Natural killer cell (primary cell): ENCODE measurements at regions of chr1 and their contacts with region 1.

Region 1: DNA sequence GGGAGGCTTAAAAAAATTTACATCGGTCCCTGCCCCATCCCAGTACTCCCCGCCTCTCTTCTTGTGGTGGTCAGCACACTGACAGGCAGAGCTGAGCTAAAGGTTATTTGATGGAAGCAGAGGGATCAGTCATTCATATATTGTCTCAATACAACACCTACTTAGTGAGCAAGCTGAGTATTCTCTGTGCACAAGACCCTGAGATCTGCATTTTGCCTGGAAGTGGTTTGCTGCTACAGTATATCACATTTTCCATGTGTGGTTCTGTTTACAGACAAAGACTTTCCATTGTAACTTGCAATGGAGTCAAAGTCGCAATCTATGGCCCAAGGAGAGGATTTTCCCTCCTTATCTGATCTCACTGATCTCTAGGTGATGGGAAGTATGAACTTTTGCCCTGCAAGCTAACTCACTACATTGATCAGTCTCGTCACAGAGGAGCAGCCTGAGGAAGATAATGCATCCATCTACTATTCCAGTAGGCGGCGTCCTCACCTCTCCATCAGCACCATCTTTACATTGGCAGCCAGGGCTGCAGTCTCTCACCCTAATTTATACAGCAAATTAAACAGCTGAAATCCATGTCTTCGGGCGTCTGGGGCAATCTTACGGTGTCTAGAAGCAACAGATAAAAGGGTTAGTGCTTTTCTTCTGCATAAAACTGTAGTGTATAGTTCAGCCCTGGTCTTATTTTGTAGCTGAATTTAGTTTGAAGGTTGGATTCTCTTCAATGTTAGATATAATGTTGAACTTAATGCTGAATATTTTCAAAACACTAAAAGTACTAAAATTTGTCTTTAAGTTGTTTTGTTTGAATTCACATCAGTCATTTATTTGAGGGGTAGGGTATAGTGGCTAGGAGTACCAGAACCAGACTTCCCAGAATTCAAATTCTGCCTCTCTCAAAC is 3.2 kb upstream of the TRAF5 start:
- DNase-seq: peak; percentile 44 to 86
- ATAC-seq: peak; percentile 69 to 82 (median 73)
- H3K4me3 ChIP-seq: no peak overlapping the region
- H3K4me3 Mint-ChIP-seq: no peak overlapping the region
- H3K27ac ChIP-seq: no peak overlapping the region
- H3K27ac Mint-ChIP-seq: no peak overlapping the region
- H3K4me1 ChIP-seq: peaks cover 23% of the 10 kb centered on the region
- H3K4me1 Mint-ChIP-seq: peaks cover 25 to 31% of the 10 kb centered on the region in 2 donors
- H3K27me3 ChIP-seq: no peaks in the 10 kb centered on the region
- H3K27me3 Mint-ChIP-seq: no peaks in the 10 kb centered on the region
- CTCF ChIP-seq: peak; percentile 82

Region 2: DNA sequence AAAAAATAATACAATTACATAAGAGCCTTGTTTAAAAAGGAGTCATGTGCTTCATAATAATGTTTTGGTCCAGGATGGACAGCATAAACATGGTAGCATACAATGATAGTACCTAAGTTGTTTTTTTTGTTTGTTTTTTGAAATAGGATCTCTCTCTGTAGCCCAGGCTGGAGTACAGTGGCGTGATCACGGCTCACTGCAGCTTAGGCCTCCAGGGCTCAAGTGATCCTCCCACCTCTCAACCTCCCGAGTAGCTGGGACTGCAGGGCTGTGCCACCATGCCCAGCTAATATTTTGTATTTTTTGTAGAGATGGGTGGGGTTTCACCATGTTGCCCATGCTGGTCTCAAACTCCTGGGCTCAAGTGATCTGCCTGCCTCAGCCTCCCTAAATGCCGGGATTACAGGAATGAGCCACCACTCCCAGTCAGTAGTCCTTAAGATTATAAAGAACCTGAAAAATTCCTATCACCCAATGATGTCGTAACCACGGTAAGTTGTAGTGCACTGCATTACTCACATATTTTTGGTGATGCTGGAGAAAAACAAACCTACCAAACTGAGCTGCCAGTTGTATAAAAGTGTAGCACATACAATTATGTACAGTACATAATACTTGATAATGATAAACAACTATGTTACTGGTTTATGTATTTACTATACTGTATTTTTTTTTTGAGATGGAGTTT is 86.6 kb before region 1 on chr1:
- intact Hi-C with region 1: no loop called
- DNase-seq: no peak
- ATAC-seq: no peak
- H3K4me3 ChIP-seq: no peak overlapping the region
- H3K4me3 Mint-ChIP-seq: no peak overlapping the region
- H3K27ac ChIP-seq: no peak overlapping the region
- H3K27ac Mint-ChIP-seq: no peak overlapping the region
- H3K4me1 ChIP-seq: no peaks in the 10 kb centered on the region
- H3K4me1 Mint-ChIP-seq: no peaks in the 10 kb centered on the region
- H3K27me3 ChIP-seq: no peaks in the 10 kb centered on the region
- H3K27me3 Mint-ChIP-seq: peaks cover 0 to 4% of the 10 kb centered on the region in 2 donors
- CTCF ChIP-seq: no peak

Region 3: DNA sequence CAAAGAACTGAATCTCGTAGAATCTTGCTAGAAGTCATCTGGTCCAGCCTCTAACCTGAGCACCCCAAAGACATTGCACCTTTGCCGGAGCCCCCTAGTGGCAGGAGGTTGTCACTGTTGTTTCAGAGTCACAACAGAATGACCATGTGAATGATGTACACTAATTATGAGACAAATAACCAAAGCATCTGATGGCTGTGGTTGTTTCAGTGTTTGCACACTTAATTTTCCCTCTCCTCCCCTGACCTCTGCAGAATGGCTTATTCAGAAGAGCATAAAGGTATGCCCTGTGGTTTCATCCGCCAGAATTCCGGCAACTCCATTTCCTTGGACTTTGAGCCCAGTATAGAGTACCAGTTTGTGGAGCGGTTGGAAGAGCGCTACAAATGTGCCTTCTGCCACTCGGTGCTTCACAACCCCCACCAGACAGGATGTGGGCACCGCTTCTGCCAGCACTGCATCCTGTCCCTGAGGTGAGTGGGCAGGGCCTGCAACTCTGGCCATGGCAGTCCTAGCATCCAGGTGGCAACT is 29.6 kb after region 1 on chr1:
- intact Hi-C with region 1: loop called (anchors 1 kb)
- DNase-seq: peak; percentile 44 to 71
- ATAC-seq: peak; percentile 77 to 88 (median 77)
- H3K4me3 ChIP-seq: no peak overlapping the region
- H3K4me3 Mint-ChIP-seq: peak overlapping the region; percentile 82
- H3K27ac ChIP-seq: peak overlapping the region; percentile 48
- H3K27ac Mint-ChIP-seq: peak overlapping the region; percentile 74 to 86
- H3K4me1 ChIP-seq: peaks cover 42% of the 10 kb centered on the region
- H3K4me1 Mint-ChIP-seq: peaks cover 58 to 74% of the 10 kb centered on the region in 2 donors
- H3K27me3 ChIP-seq: no peaks in the 10 kb centered on the region
- H3K27me3 Mint-ChIP-seq: no peaks in the 10 kb centered on the region
- CTCF ChIP-seq: peak; percentile 82

Region 4: DNA sequence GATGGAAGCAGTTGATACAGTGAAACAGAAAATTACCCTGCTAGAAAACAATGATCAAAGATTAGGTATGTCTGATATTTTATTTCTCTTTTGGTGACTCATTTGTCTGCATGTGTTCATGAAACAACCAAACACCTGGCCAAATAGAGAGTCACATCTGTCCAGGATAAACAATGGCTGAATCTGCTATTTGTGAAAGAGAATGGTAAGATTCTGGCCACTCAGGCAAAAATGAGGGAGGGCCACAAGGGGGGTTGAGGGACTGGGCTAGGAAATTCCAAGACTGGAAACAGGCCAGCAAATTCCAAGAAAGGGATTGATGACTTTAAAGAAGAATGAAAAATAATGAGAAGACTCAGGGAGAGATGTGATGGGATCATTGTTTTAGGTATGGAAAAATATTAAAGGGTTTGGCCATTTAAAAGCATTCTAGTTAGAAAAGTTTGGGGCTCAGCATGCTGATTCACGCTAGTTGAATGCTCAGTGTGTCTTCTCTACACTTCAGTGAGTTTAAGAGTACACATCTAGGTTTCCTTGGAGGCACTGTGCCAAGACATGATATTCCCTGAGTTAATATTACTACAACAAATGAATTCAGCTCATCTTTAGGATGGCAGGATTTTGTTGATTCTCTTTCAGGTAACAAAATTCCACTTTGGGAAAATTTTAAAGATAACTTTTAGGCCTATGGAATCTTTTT is 48.1 kb after region 1 on chr1:
- intact Hi-C with region 1: no loop called
- DNase-seq: no peak
- ATAC-seq: no peak
- H3K4me3 ChIP-seq: no peak overlapping the region
- H3K4me3 Mint-ChIP-seq: no peak overlapping the region
- H3K27ac ChIP-seq: no peak overlapping the region
- H3K27ac Mint-ChIP-seq: peak overlapping the region in 1 of 2 donors; percentile 36
- H3K4me1 ChIP-seq: no peaks in the 10 kb centered on the region
- H3K4me1 Mint-ChIP-seq: no peaks in the 10 kb centered on the region
- H3K27me3 ChIP-seq: no peaks in the 10 kb centered on the region
- H3K27me3 Mint-ChIP-seq: no peaks in the 10 kb centered on the region
- CTCF ChIP-seq: no peak

Region 5: GRCh38 chr1:211476200-211476849 is 152.9 kb after region 1 on chr1:
- intact Hi-C with region 1: loop called (anchors 1 kb)
- DNase-seq: peak; percentile 53 to 87
- ATAC-seq: peak; percentile 87 to 93 (median 89)
- H3K4me3 ChIP-seq: no peak overlapping the region
- H3K4me3 Mint-ChIP-seq: no peak overlapping the region
- H3K27ac ChIP-seq: no peak overlapping the region
- H3K27ac Mint-ChIP-seq: no peak overlapping the region
- H3K4me1 ChIP-seq: no peaks in the 10 kb centered on the region
- H3K4me1 Mint-ChIP-seq: no peaks in the 10 kb centered on the region
- H3K27me3 ChIP-seq: no peaks in the 10 kb centered on the region
- H3K27me3 Mint-ChIP-seq: peaks cover 17 to 23% of the 10 kb centered on the region in 2 donors
- CTCF ChIP-seq: peak; percentile 90

Region 6: DNA sequence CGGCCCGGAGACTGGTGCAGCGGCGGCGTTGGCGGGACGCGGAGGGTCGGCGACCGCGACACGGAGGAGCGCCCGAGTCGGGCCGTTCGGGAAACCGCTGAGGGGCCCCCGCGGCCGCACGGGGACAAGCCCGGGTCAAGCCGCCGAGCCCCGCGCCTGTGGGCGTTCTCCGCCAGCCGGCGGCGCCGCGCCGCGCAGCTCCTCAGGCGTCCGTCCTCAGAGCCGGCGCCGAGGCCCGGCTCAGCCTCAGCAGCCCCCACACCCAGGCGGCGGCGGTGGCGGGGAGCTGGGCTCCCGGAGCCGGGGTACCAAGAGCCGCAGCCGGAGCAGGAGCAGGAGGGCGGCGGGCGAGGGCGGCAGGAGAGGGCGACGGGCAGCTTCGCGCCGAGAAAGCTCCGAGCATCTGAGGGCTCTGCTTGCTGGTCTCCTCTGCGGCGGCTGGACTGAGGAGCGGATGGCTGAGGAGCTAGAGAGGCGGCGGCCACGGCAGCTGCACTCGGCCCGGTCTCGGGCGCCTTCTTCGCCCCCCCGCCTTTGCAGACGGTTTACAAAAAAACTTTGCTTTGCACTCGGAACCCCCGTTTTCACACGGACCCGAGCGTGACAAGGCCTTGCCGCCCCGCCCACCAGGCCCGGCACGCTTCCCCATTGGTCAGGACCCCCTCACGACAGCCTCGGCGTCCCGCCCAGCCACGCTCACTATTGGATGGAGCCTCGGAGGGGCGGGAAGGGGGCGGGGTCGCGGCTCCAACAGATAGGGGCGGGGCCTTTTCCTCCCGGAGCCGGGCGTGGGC is 255.4 kb after region 1 on chr1 and contains the start of gene SLC30A1:
- intact Hi-C with region 1: loop called (anchors 5 kb)
- DNase-seq: peak; percentile 99 to 100
- ATAC-seq: peak; percentile 88 to 98 (median 90)
- H3K4me3 ChIP-seq: peak within 1 kb of the TSS; percentile 95
- H3K4me3 Mint-ChIP-seq: peak within 1 kb of the TSS; percentile 94
- H3K27ac ChIP-seq: peak within 1 kb of the TSS; percentile 71
- H3K27ac Mint-ChIP-seq: peak within 1 kb of the TSS; percentile 81 to 83
- H3K4me1 ChIP-seq: peaks cover 39% of the 10 kb centered on the region
- H3K4me1 Mint-ChIP-seq: peaks cover 52 to 57% of the 10 kb centered on the region in 2 donors
- H3K27me3 ChIP-seq: no peaks in the 10 kb centered on the region
- H3K27me3 Mint-ChIP-seq: no peaks in the 10 kb centered on the region
- CTCF ChIP-seq: no peak
- total RNA-seq, gene SLC30A1: 8.4 to 16.0 (median 12.1) TPM

Region 7: GRCh38 chr1:211654838-211655787 is 331.7 kb after region 1 on chr1:
- intact Hi-C with region 1: loop called (anchors 1 kb)
- DNase-seq: peak; percentile 72 to 89
- ATAC-seq: peak; percentile 87 to 99 (median 98)
- H3K4me3 ChIP-seq: no peak overlapping the region
- H3K4me3 Mint-ChIP-seq: no peak overlapping the region
- H3K27ac ChIP-seq: no peak overlapping the region
- H3K27ac Mint-ChIP-seq: no peak overlapping the region
- H3K4me1 ChIP-seq: peaks cover 4% of the 10 kb centered on the region
- H3K4me1 Mint-ChIP-seq: peaks cover 5% of the 10 kb centered on the region in 2 donors
- H3K27me3 ChIP-seq: no peaks in the 10 kb centered on the region
- H3K27me3 Mint-ChIP-seq: no peaks in the 10 kb centered on the region
- CTCF ChIP-seq: peak; percentile 88